Left cardiac atrium (tissue), 4 donors: ENCODE measurements at regions of chr5 and their contacts with region 1.

Region 1: GRCh38 chr5:63963080-63963735 is 963 bp upstream of the HTR1A start:
- DNase-seq: no peak
- ATAC-seq: peak; percentile 47 to 55

Region 2: DNA sequence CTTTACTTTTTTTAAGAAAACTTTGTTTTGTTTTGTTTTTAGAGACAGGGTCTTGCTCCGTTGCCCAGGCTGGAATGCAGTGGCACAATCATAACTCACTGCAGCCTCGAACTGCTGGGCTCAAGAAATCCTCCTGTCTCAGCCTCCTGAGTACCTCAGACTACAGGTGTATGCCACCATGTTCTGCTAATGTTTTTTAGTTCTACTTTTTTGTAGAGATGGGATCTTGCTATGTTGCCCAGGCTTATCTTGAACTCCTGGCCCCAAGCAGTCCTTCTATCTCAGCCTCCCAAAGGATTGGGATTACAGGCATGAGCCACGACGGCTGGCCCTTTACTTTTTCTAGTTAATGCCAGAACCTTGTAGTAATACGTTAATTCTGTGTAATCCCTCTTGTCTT is 1514.7 kb before region 1 on chr5:
- intact Hi-C with region 1: loop called in 1 of 2 experiments (anchors 10 kb)
- DNase-seq: no peak
- ATAC-seq: no peak

Region 3: DNA sequence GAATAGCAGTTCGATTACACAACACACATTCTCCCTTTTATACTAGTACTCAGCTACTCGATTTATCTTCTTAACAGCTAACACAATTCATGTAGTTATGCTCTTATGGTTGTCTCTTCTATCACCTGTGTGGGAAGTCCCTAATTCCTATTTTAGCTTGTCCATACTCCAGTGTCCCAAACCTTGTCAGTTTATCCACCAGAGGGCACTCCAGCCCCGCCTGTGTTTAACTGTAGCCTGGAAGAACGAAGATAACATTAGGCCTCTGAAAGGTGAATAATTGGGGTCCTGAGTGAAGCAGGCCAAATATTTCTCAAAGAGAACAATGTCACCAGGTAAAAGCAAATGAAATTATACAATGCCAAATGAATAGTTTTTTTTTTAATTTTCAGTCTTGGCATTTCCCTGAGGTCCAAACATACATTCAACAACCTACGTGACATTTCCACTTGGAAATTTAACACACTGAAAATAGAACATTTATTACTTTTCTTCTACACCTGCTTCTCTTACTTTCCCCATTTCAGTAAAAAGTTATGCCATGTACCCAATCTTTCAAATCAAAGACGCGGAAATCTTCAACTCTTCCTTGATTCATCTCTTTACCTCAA is 561.7 kb before region 1 on chr5:
- intact Hi-C with region 1: loop called (anchors 5 kb)
- DNase-seq: peak; percentile 47
- ATAC-seq: peak in 1 of 2 donors; percentile 58

Region 4: GRCh38 chr5:64147849-64148441 is 184.7 kb after region 1 on chr5:
- intact Hi-C with region 1: no loop called
- DNase-seq: peak; percentile 70
- ATAC-seq: peak; percentile 42 to 55